Activated naive CD4-positive, alpha-beta T cell treated with anti-CD3 and anti-CD28 coated beads for 36 hours (primary cell): ENCODE measurements at regions of chr6 and their contacts with region 1.

Region 1: GRCh38 chr6:158072083-158072721 is 90.5 kb downstream of the SYNJ2 start:
- DNase-seq: peak; percentile 86
- H3K4me3 Mint-ChIP-seq: no peak overlapping the region
- H3K27ac Mint-ChIP-seq: peak overlapping the region; percentile 65
- H3K4me1 Mint-ChIP-seq: peaks cover 26% of the 10 kb centered on the region
- H3K27me3 Mint-ChIP-seq: no peaks in the 10 kb centered on the region

Region 2: GRCh38 chr6:157314705-157315321 is 757.4 kb before region 1 on chr6:
- CTCF ChIA-PET with region 1: interaction called, 5 read pairs
- intact Hi-C with region 1: loop called (anchors 2 kb)
- DNase-seq: peak; percentile 30
- H3K4me3 Mint-ChIP-seq: no peak overlapping the region
- H3K27ac Mint-ChIP-seq: no peak overlapping the region
- H3K4me1 Mint-ChIP-seq: peaks cover 12% of the 10 kb centered on the region
- H3K27me3 Mint-ChIP-seq: no peaks in the 10 kb centered on the region

Region 3: GRCh38 chr6:157614026-157614568 is 458.1 kb before region 1 on chr6:
- CTCF ChIA-PET with region 1: interaction called, 4 read pairs
- intact Hi-C with region 1: loop called (anchors 1 kb)
- DNase-seq: peak; percentile 22
- H3K4me3 Mint-ChIP-seq: no peak overlapping the region
- H3K27ac Mint-ChIP-seq: no peak overlapping the region
- H3K4me1 Mint-ChIP-seq: peaks cover 3% of the 10 kb centered on the region
- H3K27me3 Mint-ChIP-seq: no peaks in the 10 kb centered on the region

Region 4: DNA sequence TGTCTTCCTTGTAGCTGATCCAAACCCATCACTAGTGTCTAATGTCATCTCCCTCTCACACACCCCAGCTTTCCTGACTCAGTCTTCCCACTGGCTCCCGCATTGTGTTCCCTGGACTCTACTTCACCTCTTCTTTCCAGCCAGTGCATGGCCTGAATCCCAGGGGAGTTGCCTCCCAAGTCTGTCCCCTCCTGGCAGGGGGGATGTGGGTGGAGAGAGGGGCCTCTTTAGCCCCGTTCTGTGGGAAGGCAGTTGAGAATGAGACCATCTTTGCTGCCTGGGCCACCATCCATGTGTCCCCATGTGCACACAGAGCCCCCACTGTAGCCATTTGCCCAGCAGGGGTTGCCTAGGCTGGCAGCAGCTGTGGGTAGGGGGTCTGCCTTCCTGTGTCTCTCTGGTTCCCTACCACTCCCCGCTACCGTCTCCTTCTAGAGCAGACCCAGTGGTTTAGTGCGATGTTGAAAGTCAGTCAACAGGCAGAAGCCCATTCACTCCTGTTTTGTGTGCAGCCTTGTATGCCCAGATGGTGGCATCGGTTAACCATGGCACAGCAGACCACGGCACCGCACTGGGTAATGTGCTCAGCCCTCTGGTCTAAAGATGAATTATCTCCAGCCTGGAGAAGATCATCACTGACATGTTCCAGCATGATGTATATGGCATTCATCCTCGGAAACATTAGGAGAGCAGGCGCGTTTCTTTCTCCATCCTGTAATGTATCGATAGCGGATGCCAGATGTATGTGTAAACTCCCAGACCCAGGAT is 428.0 kb before region 1 on chr6:
- CTCF ChIA-PET with region 1: interaction called, 3 read pairs
- intact Hi-C with region 1: loop called (anchors 1 kb)
- DNase-seq: peak; percentile 71
- H3K4me3 Mint-ChIP-seq: no peak overlapping the region
- H3K27ac Mint-ChIP-seq: no peak overlapping the region
- H3K4me1 Mint-ChIP-seq: peaks cover 14% of the 10 kb centered on the region
- H3K27me3 Mint-ChIP-seq: no peaks in the 10 kb centered on the region

Region 5: DNA sequence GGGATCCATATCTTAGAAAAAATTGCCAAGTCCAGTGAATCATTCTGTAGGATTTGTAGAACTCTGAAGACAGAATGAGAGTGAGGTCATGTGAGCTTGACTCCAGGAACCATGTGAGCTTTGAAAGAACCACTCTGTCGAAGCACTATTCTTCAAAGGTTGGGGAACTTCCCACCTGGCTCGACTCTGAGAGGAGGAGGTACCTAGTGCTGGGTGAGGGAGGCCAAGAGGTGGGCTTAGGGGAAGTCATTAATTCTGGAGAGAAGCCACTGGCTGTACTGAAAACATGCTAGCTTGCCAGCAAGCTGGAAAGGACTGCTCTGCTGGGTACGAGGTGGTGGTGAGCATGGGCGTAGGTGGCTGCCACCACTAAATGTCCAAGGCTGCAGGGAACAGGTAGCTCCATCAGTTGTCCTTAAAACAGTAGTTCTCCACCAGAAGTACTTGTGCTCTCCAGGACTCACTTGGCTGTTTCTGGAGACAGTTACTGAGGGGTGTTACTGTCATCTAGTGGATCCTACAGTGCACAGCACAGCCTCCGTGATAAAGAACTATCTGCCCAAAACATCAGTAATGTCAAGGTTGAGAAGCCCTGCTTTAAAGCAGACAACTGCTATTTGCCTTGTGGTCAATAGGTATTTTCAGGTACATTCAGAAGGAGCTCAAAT is 125.2 kb before region 1 on chr6:
- CTCF ChIA-PET with region 1: interaction called, 10 read pairs
- intact Hi-C with region 1: no loop called
- DNase-seq: peak; percentile 57
- H3K4me3 Mint-ChIP-seq: no peak overlapping the region
- H3K27ac Mint-ChIP-seq: no peak overlapping the region
- H3K4me1 Mint-ChIP-seq: peaks cover 30% of the 10 kb centered on the region
- H3K27me3 Mint-ChIP-seq: no peaks in the 10 kb centered on the region

Region 6: GRCh38 chr6:157962601-157963302 is 109.5 kb before region 1 on chr6:
- CTCF ChIA-PET with region 1: interaction called, 3 read pairs
- intact Hi-C with region 1: loop called (anchors 5 kb)
- DNase-seq: peak; percentile 55
- H3K4me3 Mint-ChIP-seq: peak overlapping the region; percentile 65
- H3K27ac Mint-ChIP-seq: peak overlapping the region; percentile 89
- H3K4me1 Mint-ChIP-seq: peaks cover 21% of the 10 kb centered on the region
- H3K27me3 Mint-ChIP-seq: no peaks in the 10 kb centered on the region

Region 7: DNA sequence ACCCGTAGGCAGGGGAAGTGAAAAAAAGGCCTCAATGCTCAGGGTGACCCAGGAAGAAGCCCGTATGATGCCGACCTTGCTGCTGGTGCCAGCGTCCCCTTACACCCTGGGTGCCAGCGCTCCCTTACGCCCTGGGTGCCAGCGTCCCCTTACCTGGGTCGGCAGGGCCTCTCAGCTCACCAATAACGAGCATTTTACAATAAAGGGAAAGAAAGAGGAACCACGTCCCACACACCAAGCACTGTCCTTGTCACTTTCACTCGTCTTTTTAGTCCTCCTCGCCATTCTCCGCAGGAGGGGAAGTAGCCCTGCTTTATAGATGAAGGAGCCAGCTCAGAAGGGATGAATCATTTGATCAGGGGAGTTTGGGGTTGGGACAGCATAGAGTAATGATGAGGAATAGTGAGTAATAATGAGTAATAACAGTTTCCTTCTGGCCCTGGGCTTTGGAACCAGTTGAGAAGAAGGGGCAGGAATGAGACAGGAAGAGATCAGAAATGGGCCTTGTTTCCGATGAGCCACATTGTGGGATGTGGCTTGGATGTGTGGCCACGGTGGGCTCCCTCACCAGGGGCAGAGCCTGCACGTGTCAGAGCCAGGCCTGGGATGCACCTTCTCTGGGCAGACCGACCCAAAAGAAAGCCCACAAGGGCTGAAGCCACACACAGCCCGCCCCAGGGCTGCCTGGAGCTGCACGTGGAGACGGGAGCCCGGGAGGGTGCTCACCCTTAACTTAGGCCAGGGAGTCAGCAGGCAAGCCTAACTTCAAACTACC is 14.8 kb before region 1 on chr6:
- CTCF ChIA-PET with region 1: interaction called, 19 read pairs
- intact Hi-C with region 1: no loop called
- DNase-seq: peak; percentile 77
- H3K4me3 Mint-ChIP-seq: no peak overlapping the region
- H3K27ac Mint-ChIP-seq: peak overlapping the region; percentile 25
- H3K4me1 Mint-ChIP-seq: peaks cover 54% of the 10 kb centered on the region
- H3K27me3 Mint-ChIP-seq: no peaks in the 10 kb centered on the region

Region 8: DNA sequence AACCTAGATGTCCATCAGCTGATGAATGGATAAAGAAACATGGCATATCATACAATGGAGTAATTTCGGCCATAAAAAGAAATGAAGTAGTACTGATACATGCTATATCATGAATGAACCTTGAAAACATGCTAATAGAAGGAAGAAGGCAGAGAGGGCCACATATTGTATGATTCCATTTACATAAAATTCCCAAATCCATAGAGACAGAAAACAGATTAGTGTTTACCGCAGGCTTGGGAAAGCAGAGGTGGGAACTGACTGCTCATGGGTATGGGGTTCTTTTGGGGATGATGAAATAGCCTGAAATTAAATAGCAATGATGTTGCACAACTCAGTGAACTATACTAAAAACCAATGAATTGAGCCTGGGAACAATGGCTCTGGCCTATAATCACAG is 37.5 kb after region 1 on chr6:
- CTCF ChIA-PET with region 1: no interaction called
- intact Hi-C with region 1: no loop called
- DNase-seq: no peak
- H3K4me3 Mint-ChIP-seq: no peak overlapping the region
- H3K27ac Mint-ChIP-seq: no peak overlapping the region
- H3K4me1 Mint-ChIP-seq: no peaks in the 10 kb centered on the region
- H3K27me3 Mint-ChIP-seq: no peaks in the 10 kb centered on the region